ENCODE measurements at regions of chr14 and their contacts with region 1.

Region 1: DNA sequence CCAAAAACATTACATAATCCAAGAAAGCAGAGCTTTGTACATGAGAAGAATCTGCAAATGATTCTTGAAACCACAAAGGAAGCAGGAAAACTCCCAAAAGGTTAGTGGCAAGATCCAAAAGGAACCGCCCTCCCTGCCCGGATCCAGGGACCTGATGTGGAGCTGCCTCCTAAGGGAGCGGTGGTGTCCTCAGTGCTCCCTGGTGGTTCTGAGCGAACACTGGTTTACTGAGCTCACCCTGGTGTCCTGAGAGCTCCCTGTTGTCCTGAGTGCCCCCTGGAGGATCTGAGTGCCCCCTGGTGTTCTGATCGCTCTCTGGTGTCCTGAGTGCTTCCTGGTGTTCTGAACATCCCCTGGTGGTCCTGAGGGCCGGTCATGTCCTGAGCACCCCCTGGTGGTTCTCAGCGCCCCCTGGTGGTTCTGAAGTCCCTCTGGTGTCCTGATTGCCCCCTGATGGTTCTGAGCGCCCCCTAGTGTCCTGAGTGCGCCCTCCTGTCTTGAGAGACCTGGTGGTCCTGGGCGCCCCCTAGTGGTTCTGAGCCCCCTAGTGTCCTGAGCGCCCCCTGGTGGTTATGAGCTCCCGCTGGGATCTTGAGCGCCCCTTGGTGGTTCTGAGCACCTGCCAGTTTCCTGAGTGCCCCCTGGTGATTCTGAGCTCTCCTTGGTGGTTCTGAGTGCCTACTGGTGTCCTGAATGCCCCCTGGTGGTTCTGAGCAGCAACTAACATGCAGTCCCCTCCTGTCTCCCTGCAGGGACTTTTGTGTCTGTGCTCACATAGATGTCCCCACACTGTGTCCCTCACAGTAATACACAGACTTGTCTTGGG is 891.1 kb downstream of the TMEM121 start:
- DNase-seq: peak; percentile 93
- H3K4me3 Mint-ChIP-seq: no peak overlapping the region
- H3K27ac Mint-ChIP-seq: no peak overlapping the region
- H3K4me1 Mint-ChIP-seq: peaks cover 1% of the 10 kb centered on the region
- H3K27me3 Mint-ChIP-seq: peaks cover 20% of the 10 kb centered on the region

Region 2: DNA sequence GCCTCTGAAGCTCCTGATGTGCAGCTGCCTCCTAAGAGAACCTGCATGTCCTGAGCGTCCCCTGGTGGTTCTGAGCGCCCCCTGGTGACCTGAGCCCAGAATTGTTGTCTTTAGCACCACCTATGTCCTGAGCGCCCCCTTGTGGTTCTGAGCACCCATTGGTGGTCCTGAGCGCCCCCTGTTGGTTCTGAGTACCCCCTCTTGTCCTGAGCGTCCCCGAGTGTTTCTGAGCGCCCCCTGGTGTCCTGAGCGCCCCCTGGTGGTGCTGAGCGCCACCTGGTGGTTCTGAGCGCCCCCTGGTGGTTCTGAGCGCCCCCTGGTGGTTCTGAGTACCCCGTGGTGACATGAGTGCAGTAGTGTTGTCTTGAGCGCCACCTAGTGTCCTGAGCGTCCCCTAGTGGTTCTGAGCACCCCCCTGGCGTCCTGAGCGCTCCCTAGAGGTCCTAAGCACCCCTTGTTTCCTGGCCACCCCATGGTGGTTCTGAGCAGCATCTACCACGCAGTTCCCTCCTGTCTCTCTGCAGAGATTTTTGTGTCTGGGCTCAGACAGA is 108.5 kb before region 1 on chr14:
- CTCF ChIA-PET with region 1: interaction called, 31 read pairs
- POLR2A ChIA-PET with region 1: no interaction called
- DNase-seq: peak; percentile 92
- H3K4me3 Mint-ChIP-seq: no peak overlapping the region
- H3K27ac Mint-ChIP-seq: peak overlapping the region; percentile 42
- H3K4me1 Mint-ChIP-seq: no peaks in the 10 kb centered on the region
- H3K27me3 Mint-ChIP-seq: peaks cover 41% of the 10 kb centered on the region

Region 3: GRCh38 chr14:106378191-106378590 is 39.2 kb before region 1 on chr14:
- CTCF ChIA-PET with region 1: interaction called, 56 read pairs
- POLR2A ChIA-PET with region 1: interaction called, 3 read pairs
- DNase-seq: peak; percentile 55
- H3K4me3 Mint-ChIP-seq: no peak overlapping the region
- H3K27ac Mint-ChIP-seq: no peak overlapping the region
- H3K4me1 Mint-ChIP-seq: peaks cover 20% of the 10 kb centered on the region
- H3K27me3 Mint-ChIP-seq: peaks cover 12% of the 10 kb centered on the region

Region 4: GRCh38 chr14:106436310-106436905 is 19.0 kb after region 1 on chr14:
- CTCF ChIA-PET with region 1: interaction called, 54 read pairs
- POLR2A ChIA-PET with region 1: no interaction called
- DNase-seq: peak; percentile 56
- H3K4me3 Mint-ChIP-seq: no peak overlapping the region
- H3K27ac Mint-ChIP-seq: no peak overlapping the region
- H3K4me1 Mint-ChIP-seq: no peaks in the 10 kb centered on the region
- H3K27me3 Mint-ChIP-seq: peaks cover 48% of the 10 kb centered on the region

Region 5: GRCh38 chr14:106491851-106492250 is 74.4 kb after region 1 on chr14:
- CTCF ChIA-PET with region 1: interaction called, 13 read pairs
- POLR2A ChIA-PET with region 1: no interaction called
- DNase-seq: no peak
- H3K4me3 Mint-ChIP-seq: no peak overlapping the region
- H3K27ac Mint-ChIP-seq: no peak overlapping the region
- H3K4me1 Mint-ChIP-seq: peaks cover 38% of the 10 kb centered on the region
- H3K27me3 Mint-ChIP-seq: peaks cover 2% of the 10 kb centered on the region

Region 6: GRCh38 chr14:106530423-106531107 is 113.1 kb after region 1 on chr14:
- CTCF ChIA-PET with region 1: interaction called, 20 read pairs
- POLR2A ChIA-PET with region 1: no interaction called
- DNase-seq: peak; percentile 43
- H3K4me3 Mint-ChIP-seq: no peak overlapping the region
- H3K27ac Mint-ChIP-seq: no peak overlapping the region
- H3K4me1 Mint-ChIP-seq: peaks cover 3% of the 10 kb centered on the region
- H3K27me3 Mint-ChIP-seq: peaks cover 41% of the 10 kb centered on the region

Region 7: DNA sequence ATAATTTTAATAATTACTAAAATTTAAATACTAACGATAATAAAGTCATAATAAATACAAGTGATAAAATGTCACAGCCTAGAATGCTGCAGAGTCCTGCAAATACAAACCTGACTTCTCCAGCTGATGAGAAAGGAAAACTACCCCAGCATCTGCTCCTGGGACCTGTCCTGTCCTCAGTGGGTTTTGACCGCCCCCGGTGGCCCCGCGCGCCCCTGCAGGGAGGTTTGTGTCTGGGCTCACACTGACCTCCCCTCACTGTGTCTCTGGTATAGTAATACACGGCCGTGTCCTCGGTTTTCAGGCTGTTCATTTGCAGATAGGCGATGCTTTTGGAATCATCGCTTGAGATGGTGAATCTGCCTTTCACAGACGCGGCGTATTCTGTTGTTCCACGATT is 248.4 kb after region 1 on chr14:
- CTCF ChIA-PET with region 1: interaction called, 26 read pairs
- POLR2A ChIA-PET with region 1: no interaction called
- DNase-seq: no peak
- H3K4me3 Mint-ChIP-seq: no peak overlapping the region
- H3K27ac Mint-ChIP-seq: no peak overlapping the region
- H3K4me1 Mint-ChIP-seq: peaks cover 6% of the 10 kb centered on the region
- H3K27me3 Mint-ChIP-seq: peaks cover 52% of the 10 kb centered on the region